ENCODE measurements at regions of chr6 and their contacts with region 1.

Region 1: DNA sequence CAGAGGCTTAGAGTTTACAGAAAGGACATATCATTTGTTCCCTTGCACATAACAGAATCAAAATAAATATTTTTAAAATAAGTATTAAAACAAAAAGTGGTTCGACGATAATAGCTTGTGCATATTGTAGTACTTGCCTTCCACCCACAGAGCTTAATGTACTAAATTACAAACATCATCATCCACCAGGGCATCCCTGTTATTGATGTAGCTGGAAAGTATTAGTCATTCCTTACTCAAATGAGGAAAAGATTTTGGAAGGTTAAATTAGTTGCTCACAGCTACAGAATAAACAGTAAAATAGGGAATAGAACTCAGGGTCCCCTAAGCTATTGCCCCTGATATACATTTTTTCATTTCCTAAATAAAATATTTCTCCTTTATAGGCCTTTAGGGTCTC is 150.3 kb downstream of the PTPRK start:
- DNase-seq: no peak
- ATAC-seq: no peak
- H3K4me3 ChIP-seq: no peak overlapping the region
- H3K4me3 Mint-ChIP-seq: no peak overlapping the region
- H3K27ac ChIP-seq: no peak overlapping the region
- H3K27ac Mint-ChIP-seq: no peak overlapping the region
- H3K4me1 ChIP-seq: no peaks in the 10 kb centered on the region
- H3K4me1 Mint-ChIP-seq: no peaks in the 10 kb centered on the region
- H3K27me3 ChIP-seq: no peaks in the 10 kb centered on the region
- H3K27me3 Mint-ChIP-seq: no peaks in the 10 kb centered on the region
- CTCF ChIP-seq: no peak

Region 2: DNA sequence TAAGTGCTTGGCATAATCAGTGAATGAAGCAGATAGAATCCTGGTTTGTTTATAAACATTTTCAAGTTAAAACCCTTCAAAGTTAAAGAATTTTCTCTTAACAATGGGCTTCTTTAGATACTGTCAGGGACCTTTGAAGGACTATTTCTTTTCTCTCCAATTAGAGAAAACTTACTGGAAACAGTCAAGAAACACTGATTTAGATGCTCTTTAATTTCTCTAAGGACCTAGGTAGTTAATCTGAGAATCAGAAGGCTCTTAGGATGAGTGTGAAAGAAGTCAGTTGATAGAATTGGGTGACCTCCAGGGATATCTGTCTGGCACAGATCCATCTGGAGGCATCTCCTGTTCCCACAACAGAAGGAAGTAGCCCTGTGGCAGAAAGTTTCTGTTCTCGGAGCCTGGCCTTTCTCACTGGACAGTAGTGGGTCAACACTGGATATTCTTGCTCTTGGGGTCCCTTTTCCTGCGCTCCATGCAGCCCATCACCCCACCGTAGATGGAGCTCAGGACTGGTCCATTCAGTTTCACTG is 933.4 kb before region 1 on chr6:
- CTCF ChIA-PET with region 1: no interaction called
- POLR2A ChIA-PET with region 1: no interaction called
- intact Hi-C with region 1: no loop called
- DNase-seq: no peak
- ATAC-seq: no peak
- H3K4me3 ChIP-seq: no peak overlapping the region
- H3K4me3 Mint-ChIP-seq: no peak overlapping the region
- H3K27ac ChIP-seq: no peak overlapping the region
- H3K27ac Mint-ChIP-seq: no peak overlapping the region
- H3K4me1 ChIP-seq: no peaks in the 10 kb centered on the region
- H3K4me1 Mint-ChIP-seq: no peaks in the 10 kb centered on the region
- H3K27me3 ChIP-seq: no peaks in the 10 kb centered on the region
- H3K27me3 Mint-ChIP-seq: peaks cover 12% of the 10 kb centered on the region
- CTCF ChIP-seq: no peak

Region 3: GRCh38 chr6:128412680-128413079 is 42.6 kb after region 1 on chr6:
- CTCF ChIA-PET with region 1: no interaction called
- POLR2A ChIA-PET with region 1: no interaction called
- intact Hi-C with region 1: loop called in 1 of 2 experiments (anchors 1 kb)
- DNase-seq: no peak
- ATAC-seq: no peak
- H3K4me3 ChIP-seq: no peak overlapping the region
- H3K4me3 Mint-ChIP-seq: no peak overlapping the region
- H3K27ac ChIP-seq: no peak overlapping the region
- H3K27ac Mint-ChIP-seq: no peak overlapping the region
- H3K4me1 ChIP-seq: no peaks in the 10 kb centered on the region
- H3K4me1 Mint-ChIP-seq: no peaks in the 10 kb centered on the region
- H3K27me3 ChIP-seq: no peaks in the 10 kb centered on the region
- H3K27me3 Mint-ChIP-seq: no peaks in the 10 kb centered on the region
- CTCF ChIP-seq: no peak

Region 4: GRCh38 chr6:128438393-128438792 is 68.3 kb after region 1 on chr6:
- CTCF ChIA-PET with region 1: no interaction called
- POLR2A ChIA-PET with region 1: no interaction called
- intact Hi-C with region 1: no loop called
- DNase-seq: no peak
- ATAC-seq: no peak
- H3K4me3 ChIP-seq: no peak overlapping the region
- H3K4me3 Mint-ChIP-seq: no peak overlapping the region
- H3K27ac ChIP-seq: no peak overlapping the region
- H3K27ac Mint-ChIP-seq: no peak overlapping the region
- H3K4me1 ChIP-seq: no peaks in the 10 kb centered on the region
- H3K4me1 Mint-ChIP-seq: no peaks in the 10 kb centered on the region
- H3K27me3 ChIP-seq: peaks cover 0 to 3% of the 10 kb centered on the region in 2 experiments
- H3K27me3 Mint-ChIP-seq: no peaks in the 10 kb centered on the region
- CTCF ChIP-seq: no peak

Region 5: GRCh38 chr6:129359811-129360681 is 990.0 kb after region 1 on chr6:
- CTCF ChIA-PET with region 1: no interaction called
- POLR2A ChIA-PET with region 1: no interaction called
- intact Hi-C with region 1: loop called in 1 of 2 experiments (anchors 10 kb)
- DNase-seq: no peak
- ATAC-seq: no peak
- H3K4me3 ChIP-seq: no peak overlapping the region
- H3K4me3 Mint-ChIP-seq: no peak overlapping the region
- H3K27ac ChIP-seq: no peak overlapping the region
- H3K27ac Mint-ChIP-seq: no peak overlapping the region
- H3K4me1 ChIP-seq: no peaks in the 10 kb centered on the region
- H3K4me1 Mint-ChIP-seq: no peaks in the 10 kb centered on the region
- H3K27me3 ChIP-seq: no peaks in the 10 kb centered on the region
- H3K27me3 Mint-ChIP-seq: peaks cover 8% of the 10 kb centered on the region
- CTCF ChIP-seq: no peak